Activated naive CD4-positive, alpha-beta T cell treated with anti-CD3 and anti-CD28 coated beads for 36 hours (primary cell): ENCODE measurements at regions of chr19 and their contacts with region 1.

Region 1: GRCh38 chr19:45792470-45793177 is at the start of gene DMWD:
- DNase-seq: peak; percentile 100
- H3K4me3 Mint-ChIP-seq: peak within 1 kb of the TSS; percentile 93
- H3K27ac Mint-ChIP-seq: peak within 1 kb of the TSS; percentile 71
- H3K4me1 Mint-ChIP-seq: peaks cover 24% of the 10 kb centered on the region
- H3K27me3 Mint-ChIP-seq: peaks cover 13% of the 10 kb centered on the region
- total RNA-seq, gene DMWD: 28.6 to 29.1 TPM

Region 2: GRCh38 chr19:45717166-45717982 is 75.2 kb before region 1 on chr19:
- CTCF ChIA-PET with region 1: no interaction called
- intact Hi-C with region 1: loop called (anchors 1 kb)
- DNase-seq: peak; percentile 99
- H3K4me3 Mint-ChIP-seq: peak overlapping the region; percentile 96
- H3K27ac Mint-ChIP-seq: peak overlapping the region; percentile 97
- H3K4me1 Mint-ChIP-seq: peaks cover 41% of the 10 kb centered on the region
- H3K27me3 Mint-ChIP-seq: no peaks in the 10 kb centered on the region

Region 3: GRCh38 chr19:45779231-45780145 is 13.1 kb before region 1 on chr19:
- CTCF ChIA-PET with region 1: interaction called, 5 read pairs
- intact Hi-C with region 1: loop called (anchors 1 kb)
- DNase-seq: peak; percentile 93
- H3K4me3 Mint-ChIP-seq: peak overlapping the region; percentile 65
- H3K27ac Mint-ChIP-seq: no peak overlapping the region
- H3K4me1 Mint-ChIP-seq: peaks cover 13% of the 10 kb centered on the region
- H3K27me3 Mint-ChIP-seq: peaks cover 29% of the 10 kb centered on the region

Region 4: GRCh38 chr19:46192992-46193650 is 400.5 kb after region 1 on chr19:
- CTCF ChIA-PET with region 1: no interaction called
- intact Hi-C with region 1: no loop called
- DNase-seq: no peak
- H3K4me3 Mint-ChIP-seq: no peak overlapping the region
- H3K27ac Mint-ChIP-seq: no peak overlapping the region
- H3K4me1 Mint-ChIP-seq: no peaks in the 10 kb centered on the region
- H3K27me3 Mint-ChIP-seq: peaks cover 51% of the 10 kb centered on the region